Right lobe of liver (tissue), 6 donors: ENCODE measurements at regions of chr17 and their contacts with region 1.

Region 1: DNA sequence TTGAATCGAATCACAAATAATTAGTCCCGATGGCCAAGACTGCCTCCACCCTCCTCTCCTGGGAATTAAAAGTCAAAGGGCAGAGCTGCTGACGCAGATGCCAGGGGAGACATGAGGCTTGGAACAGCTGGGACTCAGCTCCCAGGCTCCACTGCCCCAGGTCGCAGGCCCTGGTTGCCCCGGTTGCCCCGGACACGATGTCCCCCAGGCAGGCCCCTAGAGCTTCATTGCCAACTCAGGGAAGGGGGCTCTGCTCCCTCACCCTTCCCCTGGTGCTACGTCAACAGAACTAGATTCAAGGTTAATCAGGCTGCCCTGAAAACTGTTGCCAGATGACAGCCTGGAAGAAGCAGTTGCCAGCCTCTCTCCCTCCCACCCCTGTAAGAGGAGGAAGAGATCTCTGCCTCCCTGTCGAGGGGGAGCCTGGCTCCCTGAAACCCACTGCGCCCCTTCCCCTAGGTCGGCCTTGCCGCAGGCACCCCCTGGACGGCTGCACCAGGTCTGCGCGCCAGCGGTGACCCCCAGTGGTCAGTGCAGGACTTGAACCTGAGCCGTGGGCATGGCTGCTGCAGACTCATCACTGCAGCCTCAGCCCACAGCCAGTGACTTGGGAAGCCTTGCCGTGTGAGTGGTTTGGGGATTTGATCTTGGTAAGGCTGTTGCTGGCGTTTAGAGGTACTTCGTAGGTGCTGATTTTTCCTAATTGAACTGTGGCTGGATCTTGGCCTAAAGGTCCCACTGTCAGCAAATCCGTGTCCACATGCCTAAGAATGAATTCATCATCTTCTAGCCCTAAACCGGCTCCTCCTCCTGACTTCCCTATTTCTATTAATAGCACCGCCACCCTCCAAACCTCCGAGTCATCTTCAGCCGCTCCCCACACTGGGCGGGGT is 84.1 kb upstream of the TOB1 start:
- DNase-seq: peak; percentile 81 to 95 (median 90)
- ATAC-seq: peak; percentile 78 to 85 (median 82)
- H3K4me3 ChIP-seq: peak overlapping the region in 1 of 3 donors; percentile 31
- H3K27ac ChIP-seq: peak overlapping the region; percentile 86 to 99 (median 91)
- H3K4me1 ChIP-seq: peaks cover 0 to 46% (median 30%) of the 10 kb centered on the region in 4 donors
- H3K27me3 ChIP-seq: no peaks in the 10 kb centered on the region
- CTCF ChIP-seq: peak; percentile 77 to 88 (median 80)
- POLR2A ChIP-seq: peak; percentile 60

Region 2: GRCh38 chr17:50783193-50783660 is 167.0 kb before region 1 on chr17:
- intact Hi-C with region 1: loop called in 1 of 2 experiments (anchors 10 kb)
- DNase-seq: peak; percentile 83 to 88 (median 87)
- ATAC-seq: peak; percentile 90 to 94 (median 94)
- H3K4me3 ChIP-seq: no peak overlapping the region
- H3K27ac ChIP-seq: no peak overlapping the region
- H3K4me1 ChIP-seq: peaks cover 0 to 16% (median 2%) of the 10 kb centered on the region in 4 donors
- H3K27me3 ChIP-seq: no peaks in the 10 kb centered on the region
- CTCF ChIP-seq: peak; percentile 95 to 100 (median 98)
- POLR2A ChIP-seq: no peak

Region 3: DNA sequence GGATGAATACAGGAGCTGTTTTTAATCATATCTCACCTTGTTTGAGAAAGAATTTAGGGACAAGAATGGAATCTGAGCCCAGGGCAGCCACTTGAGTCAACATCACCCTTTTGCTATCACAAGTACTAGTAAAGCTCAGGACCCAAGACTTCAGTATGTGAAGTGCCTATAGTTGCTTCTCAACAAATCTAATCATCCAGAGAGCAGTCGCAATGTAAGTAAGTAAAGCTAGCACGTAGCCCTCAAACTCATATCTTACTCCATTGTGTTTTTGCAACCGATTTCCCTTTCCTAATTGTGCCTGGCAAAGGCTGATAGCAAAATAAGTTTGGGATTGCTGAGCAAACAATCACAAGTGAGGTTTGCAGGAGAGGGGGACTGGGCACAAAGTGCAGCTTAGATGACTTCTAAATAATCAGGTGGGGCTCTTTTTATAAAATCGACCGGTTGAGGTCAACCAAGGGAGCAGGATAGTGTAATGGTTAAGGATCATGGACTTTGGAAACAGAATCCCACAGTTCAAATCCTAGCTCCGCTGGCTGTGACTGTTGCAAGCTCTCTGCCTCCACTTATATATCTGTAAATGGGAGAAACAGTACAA is 97.1 kb before region 1 on chr17:
- intact Hi-C with region 1: loop called (anchors 5 kb)
- DNase-seq: peak in 1 of 3 donors; percentile 74
- ATAC-seq: peak; percentile 59 to 82 (median 68)
- H3K4me3 ChIP-seq: no peak overlapping the region
- H3K27ac ChIP-seq: peak overlapping the region; percentile 76 to 94 (median 81)
- H3K4me1 ChIP-seq: peaks cover 0 to 40% (median 18%) of the 10 kb centered on the region in 4 donors
- H3K27me3 ChIP-seq: no peaks in the 10 kb centered on the region
- CTCF ChIP-seq: no peak
- POLR2A ChIP-seq: peak; percentile 39

Region 4: GRCh38 chr17:50865984-50866774 is 84.1 kb before region 1 on chr17 and contains the start of gene TOB1:
- intact Hi-C with region 1: loop called (anchors 5 kb)
- DNase-seq: peak; percentile 99 to 100 (median 100)
- ATAC-seq: peak; percentile 73 to 88 (median 77)
- H3K4me3 ChIP-seq: peak within 1 kb of the TSS; percentile 77 to 79 (median 78)
- H3K27ac ChIP-seq: peak within 1 kb of the TSS; percentile 97 to 100 (median 99)
- H3K4me1 ChIP-seq: peaks cover 0 to 12% (median 3%) of the 10 kb centered on the region in 4 donors
- H3K27me3 ChIP-seq: no peaks in the 10 kb centered on the region
- CTCF ChIP-seq: no peak
- POLR2A ChIP-seq: peak; percentile 98
- total RNA-seq, gene TOB1: 36.2 to 222 (median 82.1) TPM